ENCODE measurements at regions of chr1 and their contacts with region 1.

Region 1: GRCh38 chr1:202968840-202969295 is 1.8 kb upstream of the CYB5R1 start:
- DNase-seq: peak in 1 of 2 donors; percentile 72
- ATAC-seq: peak; percentile 59
- H3K4me3 ChIP-seq: no peak overlapping the region
- H3K27ac ChIP-seq: no peak overlapping the region
- H3K4me1 ChIP-seq: no peaks in the 10 kb centered on the region
- H3K27me3 ChIP-seq: no peaks in the 10 kb centered on the region

Region 2: GRCh38 chr1:202888531-202889360 is 80.1 kb before region 1 on chr1 and contains the start of gene RABIF:
- intact Hi-C with region 1: loop called in 1 of 2 experiments (anchors 1 kb)
- DNase-seq: peak; percentile 97 to 99
- ATAC-seq: peak; percentile 98
- H3K4me3 ChIP-seq: peak within 1 kb of the TSS; percentile 56 to 62
- H3K27ac ChIP-seq: peak within 1 kb of the TSS; percentile 51 to 90
- H3K4me1 ChIP-seq: no peaks in the 10 kb centered on the region
- H3K27me3 ChIP-seq: no peaks in the 10 kb centered on the region
- total RNA-seq, gene RABIF: 7.3 to 7.5 TPM

Region 3: DNA sequence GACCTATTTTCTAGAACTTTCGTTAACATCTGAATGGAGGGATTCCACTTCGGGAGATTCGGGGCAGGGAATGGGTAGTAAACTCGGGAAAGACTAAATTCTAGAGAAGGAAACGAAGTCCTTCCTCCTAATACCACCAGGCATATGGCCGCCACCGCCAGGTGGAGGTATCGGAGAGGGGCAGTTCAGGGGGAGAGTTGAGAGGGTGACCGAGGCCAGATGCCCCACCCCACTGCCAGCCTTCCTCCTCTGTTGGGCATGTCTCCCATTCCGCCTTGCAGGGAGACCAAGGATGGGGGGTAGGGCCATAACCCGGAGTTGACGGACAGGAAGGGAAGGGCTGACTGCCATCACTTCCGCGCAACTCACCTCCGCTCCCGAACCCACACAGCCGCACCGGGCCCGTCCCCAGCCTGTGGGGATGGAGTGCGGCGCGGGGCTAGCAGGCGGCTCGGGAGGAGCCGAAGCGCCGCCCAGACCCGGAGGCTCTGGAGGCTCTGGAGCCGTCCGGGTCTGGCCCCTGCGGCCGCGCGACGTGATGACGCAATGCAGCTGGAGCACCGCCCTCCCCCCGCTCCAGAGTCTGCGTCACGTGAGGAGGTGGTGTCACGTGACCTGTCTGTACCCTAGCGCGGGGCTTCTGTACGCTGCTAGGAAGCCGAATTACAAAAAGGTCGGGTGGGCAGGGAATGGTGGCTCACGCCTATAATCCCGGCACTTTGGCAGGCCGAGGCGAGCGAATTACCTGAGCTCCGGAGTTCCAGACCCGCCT is 42.0 kb before region 1 on chr1 and contains the start of gene KLHL12:
- intact Hi-C with region 1: loop called (anchors 1 to 5 kb)
- DNase-seq: peak; percentile 98 to 99
- ATAC-seq: peak; percentile 100
- H3K4me3 ChIP-seq: peak within 1 kb of the TSS; percentile 50 to 61
- H3K27ac ChIP-seq: peak within 1 kb of the TSS; percentile 31 to 53
- H3K4me1 ChIP-seq: no peaks in the 10 kb centered on the region
- H3K27me3 ChIP-seq: no peaks in the 10 kb centered on the region
- total RNA-seq, gene KLHL12: 15.9 to 17.9 TPM

Region 4: GRCh38 chr1:203006948-203007871 is 38.3 kb after region 1 on chr1 and contains the start of gene TMEM183A:
- intact Hi-C with region 1: loop called in 1 of 2 experiments (anchors 5 kb)
- DNase-seq: peak; percentile 98
- ATAC-seq: peak; percentile 100
- H3K4me3 ChIP-seq: peak within 1 kb of the TSS; percentile 91 to 94
- H3K27ac ChIP-seq: peak within 1 kb of the TSS; percentile 74 to 95
- H3K4me1 ChIP-seq: no peaks in the 10 kb centered on the region
- H3K27me3 ChIP-seq: no peaks in the 10 kb centered on the region
- total RNA-seq, gene TMEM183A: 43.9 to 47.7 TPM

Region 5: GRCh38 chr1:203026031-203026989 is 57.4 kb after region 1 on chr1 and contains the start of gene PPFIA4:
- intact Hi-C with region 1: no loop called
- DNase-seq: peak; percentile 90 to 95
- ATAC-seq: peak; percentile 94
- H3K4me3 ChIP-seq: peak within 1 kb of the TSS; percentile 8 to 23
- H3K27ac ChIP-seq: peak within 1 kb of the TSS in 1 of 2 donors; percentile 16
- H3K4me1 ChIP-seq: no peaks in the 10 kb centered on the region
- H3K27me3 ChIP-seq: no peaks in the 10 kb centered on the region
- total RNA-seq, gene PPFIA4: 20.2 to 22.7 TPM

Measured in aorta (tissue), 5 donors.